ENCODE measurements at regions of chr15 and their contacts with region 1.

Region 1: GRCh38 chr15:98616397-98616796 is 31.9 kb upstream of the IGF1R start:
- DNase-seq: no peak
- ATAC-seq: no peak
- H3K4me3 ChIP-seq: no peak overlapping the region
- H3K27ac ChIP-seq: no peak overlapping the region
- H3K4me1 ChIP-seq: no peaks in the 10 kb centered on the region
- H3K27me3 ChIP-seq: peaks cover 0 to 24% (median 3%) of the 10 kb centered on the region in 3 donors
- CTCF ChIP-seq: no peak

Region 2: GRCh38 chr15:98635848-98636247 is 19.5 kb after region 1 on chr15:
- intact Hi-C with region 1: loop called in 1 of 2 experiments (anchors 1 kb)
- DNase-seq: no peak
- ATAC-seq: no peak
- H3K4me3 ChIP-seq: no peak overlapping the region
- H3K27ac ChIP-seq: no peak overlapping the region
- H3K4me1 ChIP-seq: no peaks in the 10 kb centered on the region
- H3K27me3 ChIP-seq: peaks cover 3 to 20% (median 3%) of the 10 kb centered on the region in 3 donors
- CTCF ChIP-seq: no peak

Measured in psoas muscle (tissue), 8 donors.